GM12878 (cell line): ENCODE measurements at regions of chr2 and their contacts with region 1.

Region 1: DNA sequence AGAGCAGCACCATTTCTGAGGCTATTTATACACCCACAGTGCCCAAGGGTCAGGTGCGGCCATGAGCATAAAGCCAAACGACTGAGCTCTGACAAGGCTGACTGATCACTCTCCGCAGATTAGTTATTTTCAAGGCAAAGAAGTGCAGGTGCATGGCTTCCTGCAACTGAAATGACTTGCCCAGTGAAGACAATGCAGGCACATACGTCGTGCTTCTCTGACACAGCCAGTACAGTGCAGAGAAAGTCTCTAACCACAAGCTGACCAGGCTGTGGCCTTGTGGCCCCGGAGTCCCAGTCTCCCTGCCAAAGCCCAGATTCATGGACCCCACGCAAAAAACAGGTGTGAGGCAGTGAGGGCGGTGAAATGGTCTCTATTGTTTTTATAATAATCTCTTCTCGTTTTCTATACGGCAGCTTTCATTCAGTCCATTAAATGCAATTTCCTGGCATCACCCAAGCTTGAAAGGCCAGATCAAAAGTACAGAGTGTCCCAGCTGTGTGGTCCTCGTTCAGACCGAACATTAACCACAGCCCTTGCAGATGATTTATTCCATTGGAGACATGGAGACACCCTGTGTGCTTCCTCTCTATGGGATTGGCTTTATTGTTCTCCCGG is 447.0 kb upstream of the ID2 start:
- DNase-seq: peak; percentile 90
- ATAC-seq: peak; percentile 88
- H3K4me3 ChIP-seq: peak overlapping the region; percentile 26; the same call in 1 of the 2 replicates
- H3K27ac ChIP-seq: peak overlapping the region; percentile 41
- H3K4me1 ChIP-seq: peaks cover 39% of the 10 kb centered on the region
- H3K27me3 ChIP-seq: no peaks in the 10 kb centered on the region
- CTCF ChIP-seq: no peak
- EP300 ChIP-seq: peak; percentile 78 to 84
- POLR2A ChIP-seq: no peak
- RAD21 ChIP-seq: no peak

Region 2: DNA sequence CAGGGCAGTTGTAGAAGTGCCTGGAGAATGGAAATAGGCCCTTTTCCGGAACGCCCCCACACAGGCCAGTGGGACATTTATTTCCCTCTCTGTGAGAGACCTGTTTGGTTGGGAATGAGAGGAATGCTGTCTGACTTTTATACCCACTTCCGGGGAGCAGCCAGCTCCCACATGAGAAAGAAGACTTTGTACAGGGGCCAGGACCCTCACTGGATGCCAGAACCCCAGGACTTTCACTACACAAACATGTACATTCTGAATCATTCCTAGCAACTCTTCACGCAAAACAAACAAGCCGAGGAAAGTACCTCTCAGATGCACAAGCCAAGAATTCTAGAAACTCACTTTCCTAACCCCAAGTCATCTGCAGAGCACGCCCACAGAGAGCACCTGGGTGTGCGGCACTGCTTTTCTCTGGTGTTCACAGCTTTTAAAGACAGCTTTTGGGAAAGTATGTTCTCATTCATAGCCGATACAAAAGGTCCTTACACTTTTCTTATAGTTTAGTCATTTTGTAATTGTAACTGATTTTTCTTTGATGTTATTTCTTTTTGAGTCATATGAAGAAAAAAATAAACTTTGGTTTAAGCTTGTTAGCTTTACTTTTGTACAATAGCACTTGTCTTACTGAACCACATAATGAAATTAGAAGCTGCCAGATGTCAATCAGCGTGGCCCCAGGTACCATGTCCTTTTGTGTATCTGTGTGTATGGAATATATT is 409.1 kb before region 1 on chr2:
- CTCF ChIA-PET with region 1: no interaction called
- POLR2A ChIA-PET with region 1: no interaction called
- RAD21 ChIA-PET with region 1: interaction called, 9 read pairs
- SMC1A ChIA-PET with region 1: no interaction called
- in situ Hi-C with region 1: no loop called
- intact Hi-C with region 1: loop called (anchors 2 kb)
- DNase-seq: peak; percentile 78
- ATAC-seq: peak; percentile 97
- H3K4me3 ChIP-seq: no peak overlapping the region
- H3K27ac ChIP-seq: peak overlapping the region; percentile 75
- H3K4me1 ChIP-seq: peaks cover 10% of the 10 kb centered on the region
- H3K27me3 ChIP-seq: no peaks in the 10 kb centered on the region
- CTCF ChIP-seq: no peak
- EP300 ChIP-seq: peak; percentile 94 to 98
- POLR2A ChIP-seq: no peak
- RAD21 ChIP-seq: peak; percentile 19; the same call in 1 of the 2 replicates

Region 3: GRCh38 chr2:8049851-8050571 is 184.9 kb before region 1 on chr2:
- CTCF ChIA-PET with region 1: no interaction called
- POLR2A ChIA-PET with region 1: interaction called, 3 read pairs
- RAD21 ChIA-PET with region 1: interaction called, 3 read pairs
- SMC1A ChIA-PET with region 1: interaction called, 3 read pairs
- in situ Hi-C with region 1: no loop called
- intact Hi-C with region 1: loop called (anchors 5 kb)
- DNase-seq: peak; percentile 79
- ATAC-seq: peak; percentile 98
- H3K4me3 ChIP-seq: no peak overlapping the region
- H3K27ac ChIP-seq: peak overlapping the region; percentile 59
- H3K4me1 ChIP-seq: peaks cover 21% of the 10 kb centered on the region
- H3K27me3 ChIP-seq: no peaks in the 10 kb centered on the region
- CTCF ChIP-seq: no peak
- EP300 ChIP-seq: peak; percentile 65 to 69; a peak in 3 of 4 replicates
- POLR2A ChIP-seq: no peak
- RAD21 ChIP-seq: no peak

Region 4: GRCh38 chr2:8247905-8248622 is 13.2 kb after region 1 on chr2:
- CTCF ChIA-PET with region 1: interaction called, 14 read pairs
- POLR2A ChIA-PET with region 1: interaction called, 10 read pairs
- RAD21 ChIA-PET with region 1: interaction called, 23 read pairs
- SMC1A ChIA-PET with region 1: interaction called, 125 read pairs
- in situ Hi-C with region 1: no loop called
- intact Hi-C with region 1: no loop called
- DNase-seq: no peak
- ATAC-seq: no peak
- H3K4me3 ChIP-seq: no peak overlapping the region
- H3K27ac ChIP-seq: no peak overlapping the region
- H3K4me1 ChIP-seq: peaks cover 15% of the 10 kb centered on the region
- H3K27me3 ChIP-seq: no peaks in the 10 kb centered on the region
- CTCF ChIP-seq: no peak
- EP300 ChIP-seq: no peak
- POLR2A ChIP-seq: no peak
- RAD21 ChIP-seq: no peak

Region 5: GRCh38 chr2:8277921-8278571 is 43.2 kb after region 1 on chr2:
- CTCF ChIA-PET with region 1: interaction called, 4 read pairs
- POLR2A ChIA-PET with region 1: interaction called, 8 read pairs
- RAD21 ChIA-PET with region 1: interaction called, 9 read pairs
- SMC1A ChIA-PET with region 1: interaction called, 11 read pairs
- in situ Hi-C with region 1: no loop called
- intact Hi-C with region 1: loop called (anchors 5 kb)
- DNase-seq: peak; percentile 56
- ATAC-seq: peak; percentile 95
- H3K4me3 ChIP-seq: peak overlapping the region; percentile 40; the same call in 1 of the 2 replicates
- H3K27ac ChIP-seq: peak overlapping the region; percentile 56
- H3K4me1 ChIP-seq: peaks cover 17% of the 10 kb centered on the region
- H3K27me3 ChIP-seq: no peaks in the 10 kb centered on the region
- CTCF ChIP-seq: no peak
- EP300 ChIP-seq: peak in 1 of 2 experiments; percentile 58; a peak in 1 of 4 replicates
- POLR2A ChIP-seq: no peak
- RAD21 ChIP-seq: no peak